ENCODE measurements at regions of chr5 and their contacts with region 1.

Region 1: GRCh38 chr5:149656576-149657182 is 73.4 kb upstream of the PPARGC1B start:
- DNase-seq: no peak

Region 2: DNA sequence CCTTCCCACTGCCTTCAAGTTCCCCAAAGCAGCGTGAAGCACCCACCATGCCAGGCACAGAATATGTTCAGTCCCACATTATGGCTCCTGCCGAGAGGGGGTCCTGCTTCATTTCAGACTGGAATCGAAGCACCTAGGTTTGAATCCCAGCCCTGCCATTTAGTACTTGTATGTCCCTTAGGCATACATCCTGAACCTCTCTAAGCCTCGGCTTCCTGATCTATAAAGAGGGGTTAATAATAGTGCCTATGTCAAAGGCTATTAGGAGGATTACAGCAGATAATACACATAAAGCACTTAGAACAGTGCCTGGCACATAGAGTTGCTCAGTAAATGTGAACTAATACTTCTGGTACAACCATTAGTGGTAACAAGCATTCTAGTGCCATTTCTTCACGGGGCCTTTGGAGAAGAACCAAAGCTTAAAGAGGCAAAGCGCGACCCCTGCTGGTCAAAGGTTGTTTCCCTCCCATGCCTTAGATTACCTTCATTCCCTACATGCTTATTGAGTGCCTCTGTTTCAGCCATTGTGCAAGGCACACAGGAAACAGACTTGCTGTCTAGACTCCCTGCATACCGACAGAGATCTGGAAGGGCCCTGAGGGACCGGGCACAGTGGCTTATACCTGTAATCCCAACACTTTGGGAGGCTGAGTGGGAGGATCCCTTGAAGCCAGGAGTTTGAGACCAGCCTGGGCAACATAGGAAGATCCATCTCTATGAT is 171.6 kb after region 1 on chr5:
- intact Hi-C with region 1: loop called in 1 of 2 experiments (anchors 5 kb)
- DNase-seq: peak; percentile 96

Measured in posterior vena cava (tissue), 2 donors.